Head of caudate nucleus (tissue), 42 donors: ENCODE measurements at regions of chr17 and their contacts with region 1.

Region 1: DNA sequence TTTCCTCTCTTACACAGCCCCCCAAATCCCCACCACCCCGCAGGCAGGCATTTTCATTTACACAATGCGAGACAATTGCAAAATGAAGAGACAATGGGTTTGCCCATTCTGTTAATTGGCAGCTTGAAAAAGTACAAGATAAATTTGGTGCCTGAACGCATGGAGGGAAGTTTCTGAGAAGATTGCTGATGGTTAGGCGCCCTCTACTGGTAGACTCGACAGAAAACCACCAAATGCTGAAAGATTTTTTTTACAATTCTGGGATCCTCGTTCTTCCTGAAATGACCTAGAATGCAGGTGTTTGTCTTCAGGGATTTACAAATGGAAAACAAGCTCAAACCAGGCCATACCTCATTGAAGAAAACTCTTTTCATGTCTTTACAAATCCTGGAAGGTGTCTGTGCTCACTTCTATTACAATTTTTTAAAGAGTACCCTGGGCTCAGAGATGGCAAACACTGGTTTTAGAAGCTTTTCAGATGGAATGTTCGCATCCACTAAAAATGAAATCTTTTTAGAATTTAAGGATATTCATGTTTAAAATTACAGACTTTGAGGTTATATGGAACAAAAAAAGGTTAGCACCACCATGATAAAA is 338.5 kb downstream of the PMP22 start:
- DNase-seq: peak in 39 of 42 donors; percentile 6 to 84 (median 61)

Region 2: GRCh38 chr17:13337864-13338371 is 1588.7 kb before region 1 on chr17:
- intact Hi-C with region 1: loop called (anchors 10 kb)
- DNase-seq: peak in 20 of 42 donors; percentile 2 to 57 (median 22)